OCI-LY7 (cell line): ENCODE measurements at regions of chr14 and their contacts with region 1.

Region 1: GRCh38 chr14:95662376-95663186 is 23.6 kb upstream of the TCL1B start:
- DNase-seq: peak; percentile 73
- H3K4me3 ChIP-seq: peak overlapping the region; percentile 48
- H3K27ac ChIP-seq: peak overlapping the region; percentile 98
- H3K4me1 ChIP-seq: peaks cover 96% of the 10 kb centered on the region
- CTCF ChIP-seq: no peak

Region 2: GRCh38 chr14:95460647-95461478 is 201.7 kb before region 1 on chr14:
- CTCF ChIA-PET with region 1: no interaction called
- POLR2A ChIA-PET with region 1: no interaction called
- intact Hi-C with region 1: loop called (anchors 10 kb)
- DNase-seq: no peak
- H3K4me3 ChIP-seq: no peak overlapping the region
- H3K27ac ChIP-seq: no peak overlapping the region
- H3K4me1 ChIP-seq: peaks cover 43% of the 10 kb centered on the region
- CTCF ChIP-seq: no peak

Region 3: DNA sequence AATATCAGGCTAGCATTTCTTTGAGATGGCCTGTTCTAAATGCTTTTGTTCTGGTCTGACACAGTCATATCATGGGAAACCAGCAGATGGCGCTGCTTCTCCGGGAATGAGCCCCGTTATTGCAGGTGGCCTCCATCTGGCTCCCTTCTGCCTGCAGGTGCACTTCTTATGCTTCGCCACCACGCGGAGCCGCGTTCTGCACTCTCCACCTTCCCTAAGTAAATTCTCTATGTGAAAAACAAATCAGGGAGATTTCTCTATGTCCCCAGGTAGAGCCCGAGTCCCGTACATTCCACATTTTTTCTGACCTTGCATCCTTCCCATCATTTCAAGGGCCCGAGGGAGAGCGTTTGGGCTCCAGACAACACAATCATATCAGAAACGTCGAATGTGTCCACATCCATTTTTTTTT is 101.6 kb before region 1 on chr14:
- CTCF ChIA-PET with region 1: no interaction called
- POLR2A ChIA-PET with region 1: no interaction called
- intact Hi-C with region 1: loop called (anchors 2 kb)
- DNase-seq: peak; percentile 92
- H3K4me3 ChIP-seq: no peak overlapping the region
- H3K27ac ChIP-seq: no peak overlapping the region
- H3K4me1 ChIP-seq: peaks cover 6% of the 10 kb centered on the region
- CTCF ChIP-seq: peak; percentile 100

Region 4: GRCh38 chr14:95683793-95684192 is 21.2 kb after region 1 on chr14:
- CTCF ChIA-PET with region 1: interaction called, 26 read pairs
- POLR2A ChIA-PET with region 1: interaction called, 235 read pairs
- intact Hi-C with region 1: no loop called
- DNase-seq: peak; percentile 69
- H3K4me3 ChIP-seq: no peak overlapping the region
- H3K27ac ChIP-seq: no peak overlapping the region
- H3K4me1 ChIP-seq: peaks cover 72% of the 10 kb centered on the region
- CTCF ChIP-seq: peak; percentile 98

Region 5: DNA sequence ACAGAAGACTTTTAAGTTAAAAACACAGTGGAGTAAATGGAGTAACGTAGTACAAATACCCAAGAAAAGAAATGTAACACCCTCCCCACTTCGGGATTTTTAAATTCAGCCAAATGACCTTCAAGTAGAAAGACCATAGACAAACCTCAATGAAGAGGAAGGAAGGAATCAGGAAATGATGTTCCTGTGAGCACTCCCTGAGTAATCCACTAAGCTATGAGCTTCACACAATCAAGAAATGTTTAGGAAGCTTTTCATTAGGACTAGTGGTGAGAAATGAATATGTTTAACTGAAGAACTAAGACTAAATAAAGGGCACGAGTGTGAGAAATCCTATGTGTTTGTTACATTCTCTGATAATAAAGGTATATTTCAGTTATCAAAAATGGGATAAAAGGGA is 41.2 kb after region 1 on chr14:
- CTCF ChIA-PET with region 1: interaction called, 3 read pairs
- POLR2A ChIA-PET with region 1: interaction called, 235 read pairs
- intact Hi-C with region 1: no loop called
- DNase-seq: no peak
- H3K4me3 ChIP-seq: peak overlapping the region; percentile 10
- H3K27ac ChIP-seq: peak overlapping the region; percentile 69
- H3K4me1 ChIP-seq: peaks cover 92% of the 10 kb centered on the region
- CTCF ChIP-seq: no peak; the same call in 1 of the 2 replicates

Region 6: GRCh38 chr14:95935228-95935822 is 272.7 kb after region 1 on chr14:
- CTCF ChIA-PET with region 1: no interaction called
- POLR2A ChIA-PET with region 1: no interaction called
- intact Hi-C with region 1: no loop called
- DNase-seq: peak; percentile 45
- H3K4me3 ChIP-seq: no peak overlapping the region
- H3K27ac ChIP-seq: no peak overlapping the region
- H3K4me1 ChIP-seq: no peaks in the 10 kb centered on the region
- CTCF ChIP-seq: no peak